WTC11 (cell line): ENCODE measurements at regions of chr13 and their contacts with region 1.

Region 1: DNA sequence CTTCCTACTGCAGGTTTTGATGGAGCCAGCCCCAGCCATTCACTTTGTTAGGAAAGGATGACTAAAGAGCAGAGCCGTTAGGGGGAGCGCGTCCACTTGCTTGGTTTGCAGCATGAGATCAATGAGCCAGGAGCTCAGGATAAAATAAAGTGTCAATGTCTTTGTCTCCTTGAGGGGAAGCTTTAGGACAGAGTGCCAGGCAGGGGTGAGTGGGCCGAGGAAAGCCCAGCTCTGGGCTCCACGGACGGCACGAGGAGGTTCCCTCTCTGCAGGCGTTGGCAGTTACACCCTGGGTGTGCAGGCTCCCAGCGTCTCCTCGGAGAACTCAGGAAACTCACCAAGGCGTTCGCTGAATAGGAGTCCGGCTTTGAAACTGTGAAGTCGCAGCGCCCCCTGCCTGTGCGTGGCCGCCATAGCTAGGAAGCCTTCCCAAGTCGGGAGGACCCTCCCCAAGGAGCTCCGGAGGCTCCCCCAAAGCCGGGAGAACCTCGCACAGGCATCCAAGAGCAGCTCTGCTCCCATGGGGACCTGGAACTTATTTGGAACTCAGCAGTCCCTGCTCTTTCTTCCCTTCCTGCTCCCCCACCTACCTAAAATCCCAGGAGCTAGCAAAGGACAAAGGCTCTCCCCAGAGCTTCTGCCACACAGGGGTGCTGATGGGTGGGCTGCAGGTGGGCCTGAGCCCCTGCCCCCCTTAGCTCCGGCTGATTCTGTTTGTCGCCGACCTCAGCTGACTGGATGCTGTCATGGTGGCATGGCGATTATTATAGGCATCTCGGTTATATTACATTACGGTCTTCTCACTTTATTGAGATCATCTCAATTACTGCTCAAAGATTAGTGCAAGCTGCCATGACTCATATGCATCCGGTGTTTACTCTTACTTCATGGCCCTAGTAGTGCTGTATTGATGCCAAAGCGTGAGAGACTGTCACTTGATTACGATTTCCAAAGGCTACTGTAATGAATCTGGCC is 34.4 kb downstream of the GSX1 start:
- DNase-seq: peak; percentile 96
- ATAC-seq: peak; percentile 80
- H3K4me3 Mint-ChIP-seq: peak overlapping the region; percentile 59
- H3K27ac Mint-ChIP-seq: no peak overlapping the region
- H3K4me1 Mint-ChIP-seq: peaks cover 27% of the 10 kb centered on the region
- H3K27me3 Mint-ChIP-seq: peaks cover 100% of the 10 kb centered on the region
- CTCF ChIP-seq: peak; percentile 92

Region 2: DNA sequence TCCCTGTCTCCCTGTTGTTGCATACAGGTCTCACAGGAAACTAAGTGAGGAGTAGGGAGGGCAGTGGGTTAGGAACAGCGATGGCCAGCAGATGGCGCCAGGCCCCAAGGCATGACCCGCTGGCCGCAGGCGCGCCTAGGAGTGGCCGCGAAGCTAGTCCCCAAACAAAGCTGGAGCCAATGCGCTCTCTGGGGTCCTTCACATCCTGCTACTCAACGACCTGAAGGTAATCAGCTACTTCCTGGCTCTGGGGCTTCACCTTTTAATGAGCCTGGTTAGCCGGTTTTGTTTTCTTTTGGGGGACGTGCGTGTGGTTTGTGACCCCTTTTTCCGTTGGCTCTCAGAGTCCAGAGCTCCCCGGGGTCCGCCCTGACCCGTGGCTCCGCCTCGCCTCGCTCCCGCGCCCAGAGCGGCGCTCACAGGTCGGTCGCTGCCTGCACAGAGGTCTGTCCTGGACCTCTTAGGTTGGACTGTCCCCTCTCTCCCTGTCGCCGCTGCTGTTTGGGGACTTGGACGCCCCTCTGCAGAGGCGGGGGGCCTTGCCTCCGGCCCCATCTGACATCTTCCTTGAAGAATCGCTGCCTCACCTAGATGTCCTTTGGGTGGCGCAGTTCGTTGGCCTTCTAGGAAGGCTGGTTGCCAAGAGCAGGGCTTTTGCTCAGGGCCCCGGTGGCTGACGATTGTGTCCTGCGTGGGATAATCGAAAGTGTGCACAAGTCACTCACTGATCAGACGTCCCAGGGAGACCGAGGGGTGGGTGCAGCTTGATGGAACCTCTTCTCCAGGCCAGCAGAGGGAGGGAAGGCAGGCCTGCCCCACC is 464.4 kb before region 1 on chr13:
- CTCF ChIA-PET with region 1: interaction called, 97 read pairs
- POLR2A ChIA-PET with region 1: no interaction called
- DNase-seq: peak; percentile 95
- ATAC-seq: peak; percentile 93
- H3K4me3 Mint-ChIP-seq: peak overlapping the region; percentile 80
- H3K27ac Mint-ChIP-seq: no peak overlapping the region
- H3K4me1 Mint-ChIP-seq: peaks cover 24% of the 10 kb centered on the region
- H3K27me3 Mint-ChIP-seq: no peaks in the 10 kb centered on the region; the same call in none of the 2 replicates
- CTCF ChIP-seq: peak; percentile 88

Region 3: GRCh38 chr13:27620377-27621115 is 206.1 kb before region 1 on chr13 and contains the start of gene LNX2:
- CTCF ChIA-PET with region 1: interaction called, 21 read pairs
- POLR2A ChIA-PET with region 1: interaction called, 4 read pairs
- DNase-seq: peak; percentile 98
- ATAC-seq: peak; percentile 92
- H3K4me3 Mint-ChIP-seq: peak within 1 kb of the TSS; percentile 93
- H3K27ac Mint-ChIP-seq: peak within 1 kb of the TSS; percentile 96
- H3K4me1 Mint-ChIP-seq: peaks cover 54% of the 10 kb centered on the region
- H3K27me3 Mint-ChIP-seq: no peaks in the 10 kb centered on the region
- CTCF ChIP-seq: no peak
- total RNA-seq, gene LNX2: 9.6 to 10.1 TPM (median 9.8 TPM) in 3 replicates

Region 4: GRCh38 chr13:27728271-27728670 is 98.4 kb before region 1 on chr13:
- CTCF ChIA-PET with region 1: interaction called, 16 read pairs
- POLR2A ChIA-PET with region 1: no interaction called
- DNase-seq: peak; percentile 29
- ATAC-seq: peak; percentile 94
- H3K4me3 Mint-ChIP-seq: no peak overlapping the region
- H3K27ac Mint-ChIP-seq: no peak overlapping the region
- H3K4me1 Mint-ChIP-seq: peaks cover 14% of the 10 kb centered on the region
- H3K27me3 Mint-ChIP-seq: peaks cover 3% of the 10 kb centered on the region; the same call in 1 of the 2 replicates
- CTCF ChIP-seq: no peak

Region 5: GRCh38 chr13:27792393-27793218 is 34.1 kb before region 1 on chr13 and contains the start of gene GSX1:
- CTCF ChIA-PET with region 1: interaction called, 163 read pairs
- POLR2A ChIA-PET with region 1: interaction called, 4 read pairs
- DNase-seq: peak; percentile 87
- ATAC-seq: peak; percentile 51
- H3K4me3 Mint-ChIP-seq: peak within 1 kb of the TSS; percentile 59
- H3K27ac Mint-ChIP-seq: no peak within 1 kb of the TSS
- H3K4me1 Mint-ChIP-seq: peaks cover 64% of the 10 kb centered on the region
- H3K27me3 Mint-ChIP-seq: peaks cover 100% of the 10 kb centered on the region
- CTCF ChIP-seq: no peak
- total RNA-seq, gene GSX1: not detected in 3 replicates

Region 6: GRCh38 chr13:27919934-27920676 is 93.4 kb after region 1 on chr13 and contains the start of gene PDX1:
- CTCF ChIA-PET with region 1: interaction called, 19 read pairs
- POLR2A ChIA-PET with region 1: interaction called, 3 read pairs
- DNase-seq: peak; percentile 77
- ATAC-seq: peak; percentile 73
- H3K4me3 Mint-ChIP-seq: peak within 1 kb of the TSS; percentile 61
- H3K27ac Mint-ChIP-seq: no peak within 1 kb of the TSS
- H3K4me1 Mint-ChIP-seq: peaks cover 53% of the 10 kb centered on the region
- H3K27me3 Mint-ChIP-seq: peaks cover 99% of the 10 kb centered on the region
- CTCF ChIP-seq: no peak
- total RNA-seq, gene PDX1: not detected in 3 replicates

Region 7: GRCh38 chr13:27968316-27969081 is 141.8 kb after region 1 on chr13:
- CTCF ChIA-PET with region 1: interaction called, 25 read pairs
- POLR2A ChIA-PET with region 1: no interaction called
- DNase-seq: peak; percentile 62
- ATAC-seq: peak; percentile 1; the same call in 1 of the 2 replicates
- H3K4me3 Mint-ChIP-seq: peak overlapping the region; percentile 54
- H3K27ac Mint-ChIP-seq: no peak overlapping the region
- H3K4me1 Mint-ChIP-seq: peaks cover 62% of the 10 kb centered on the region
- H3K27me3 Mint-ChIP-seq: peaks cover 100% of the 10 kb centered on the region
- CTCF ChIP-seq: no peak

Region 8: DNA sequence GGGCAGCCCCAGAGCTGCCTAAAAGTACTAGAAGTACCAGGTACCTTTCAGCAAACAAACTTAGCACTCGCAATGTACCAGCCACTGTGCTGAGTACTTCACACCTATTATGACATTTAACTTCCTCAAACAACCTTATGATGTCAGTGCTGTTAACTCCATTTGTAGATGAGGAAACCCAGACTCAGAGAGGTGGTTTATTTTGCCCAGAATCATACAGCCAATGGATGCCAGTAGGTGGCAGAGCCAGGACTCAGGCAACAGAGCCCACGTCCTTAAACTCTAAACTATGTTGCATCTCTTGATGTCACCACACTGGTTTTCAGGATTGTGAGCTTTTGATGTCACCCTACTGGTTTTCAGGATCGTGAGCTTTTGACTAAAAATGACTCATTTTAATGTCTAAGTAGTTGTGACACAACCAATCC is 589.3 kb after region 1 on chr13:
- CTCF ChIA-PET with region 1: no interaction called
- POLR2A ChIA-PET with region 1: no interaction called
- DNase-seq: no peak
- ATAC-seq: no peak
- H3K4me3 Mint-ChIP-seq: no peak overlapping the region
- H3K27ac Mint-ChIP-seq: no peak overlapping the region
- H3K4me1 Mint-ChIP-seq: peaks cover 41% of the 10 kb centered on the region
- H3K27me3 Mint-ChIP-seq: no peaks in the 10 kb centered on the region
- CTCF ChIP-seq: no peak